T-cell (primary cell): ENCODE measurements at regions of chr17 and their contacts with region 1.

Region 1: DNA sequence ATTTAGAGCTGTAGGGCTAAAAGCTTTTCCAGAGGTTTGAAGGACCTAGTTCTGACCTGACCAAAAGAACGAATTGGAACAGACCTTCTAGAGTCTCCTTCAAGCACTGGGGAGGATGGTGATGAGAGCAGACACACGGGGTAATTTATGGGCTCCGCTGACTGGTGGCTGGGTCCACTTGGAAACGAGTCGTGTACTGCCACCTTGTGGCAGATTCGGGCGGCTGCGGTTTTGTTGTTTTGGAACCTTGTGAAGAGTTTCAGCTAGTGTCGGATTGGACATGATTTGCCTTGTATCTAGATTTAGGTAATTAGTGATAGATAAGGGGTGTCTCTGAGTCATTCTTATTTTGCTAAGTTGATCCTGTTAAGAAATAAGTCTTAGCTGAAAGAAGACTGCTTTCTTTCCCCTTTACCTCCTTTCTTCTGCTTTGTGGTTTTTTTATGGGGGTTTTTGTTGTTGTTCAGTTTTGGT is 98.9 kb downstream of the AATF start:
- DNase-seq: peak; percentile 54 to 85 (median 74)
- ATAC-seq: peak; percentile 66 to 83 (median 78)
- H3K4me3 ChIP-seq: no peak overlapping the region
- H3K4me3 Mint-ChIP-seq: no peak overlapping the region
- H3K27ac ChIP-seq: no peak overlapping the region
- H3K27ac Mint-ChIP-seq: no peak overlapping the region
- H3K4me1 ChIP-seq: peaks cover 2 to 6% of the 10 kb centered on the region in 2 experiments
- H3K4me1 Mint-ChIP-seq: peaks cover 12 to 18% (median 14%) of the 10 kb centered on the region in 3 donors
- H3K27me3 ChIP-seq: no peaks in the 10 kb centered on the region
- H3K27me3 Mint-ChIP-seq: no peaks in the 10 kb centered on the region

Region 2: GRCh38 chr17:36629252-36629847 is 418.3 kb before region 1 on chr17:
- CTCF ChIA-PET with region 1: interaction called, 4 to 10 read pairs
- POLR2A ChIA-PET with region 1: no interaction called
- DNase-seq: peak; percentile 30 to 86 (median 67)
- ATAC-seq: peak; percentile 69 to 87 (median 78)
- H3K4me3 ChIP-seq: no peak overlapping the region
- H3K4me3 Mint-ChIP-seq: no peak overlapping the region
- H3K27ac ChIP-seq: no peak overlapping the region
- H3K27ac Mint-ChIP-seq: no peak overlapping the region
- H3K4me1 ChIP-seq: peaks cover 0 to 7% of the 10 kb centered on the region in 2 experiments
- H3K4me1 Mint-ChIP-seq: no peaks in the 10 kb centered on the region
- H3K27me3 ChIP-seq: peaks cover 0 to 31% of the 10 kb centered on the region in 2 experiments
- H3K27me3 Mint-ChIP-seq: peaks cover 14 to 16% of the 10 kb centered on the region in 2 donors